ENCODE measurements at regions of chr13 and their contacts with region 1.

Region 1: GRCh38 chr13:43804461-43805070 is 17.8 kb upstream of the ENOX1 start:
- DNase-seq: peak; percentile 64
- H3K4me3 ChIP-seq: peak overlapping the region; percentile 39 to 52 (median 40)
- H3K27ac ChIP-seq: peak overlapping the region; percentile 98
- H3K4me1 ChIP-seq: peaks cover 27% of the 10 kb centered on the region
- H3K27me3 ChIP-seq: no peaks in the 10 kb centered on the region
- CTCF ChIP-seq: peak; percentile 35 to 46

Region 2: GRCh38 chr13:42594970-42595571 is 1209.5 kb before region 1 on chr13:
- CTCF ChIA-PET with region 1: no interaction called
- dilution Hi-C with region 1: no loop called
- in situ Hi-C with region 1: no loop called
- intact Hi-C with region 1: loop called (anchors 10 kb)
- DNase-seq: peak; percentile 48
- H3K4me3 ChIP-seq: no peak overlapping the region
- H3K27ac ChIP-seq: no peak overlapping the region
- H3K4me1 ChIP-seq: no peaks in the 10 kb centered on the region
- H3K27me3 ChIP-seq: no peaks in the 10 kb centered on the region
- CTCF ChIP-seq: peak; percentile 77 to 89

Region 3: GRCh38 chr13:42883771-42884467 is 920.6 kb before region 1 on chr13:
- CTCF ChIA-PET with region 1: no interaction called
- dilution Hi-C with region 1: no loop called
- in situ Hi-C with region 1: no loop called
- intact Hi-C with region 1: loop called (anchors 10 kb)
- DNase-seq: peak; percentile 25
- H3K4me3 ChIP-seq: no peak overlapping the region
- H3K27ac ChIP-seq: no peak overlapping the region
- H3K4me1 ChIP-seq: peaks cover 12% of the 10 kb centered on the region
- H3K27me3 ChIP-seq: no peaks in the 10 kb centered on the region
- CTCF ChIP-seq: peak; percentile 29 to 36

Region 4: GRCh38 chr13:43085545-43085944 is 719.0 kb before region 1 on chr13:
- CTCF ChIA-PET with region 1: interaction called, 4 read pairs
- dilution Hi-C with region 1: no loop called
- in situ Hi-C with region 1: loop called in 1 of 2 experiments (anchors 25 kb)
- intact Hi-C with region 1: loop called (anchors 1 kb)
- DNase-seq: peak; percentile 12
- H3K4me3 ChIP-seq: no peak overlapping the region
- H3K27ac ChIP-seq: no peak overlapping the region
- H3K4me1 ChIP-seq: no peaks in the 10 kb centered on the region
- H3K27me3 ChIP-seq: no peaks in the 10 kb centered on the region
- CTCF ChIP-seq: peak; percentile 44 to 45

Region 5: GRCh38 chr13:43196086-43196621 is 608.4 kb before region 1 on chr13:
- CTCF ChIA-PET with region 1: no interaction called
- dilution Hi-C with region 1: no loop called
- in situ Hi-C with region 1: no loop called
- intact Hi-C with region 1: loop called (anchors 5 kb)
- DNase-seq: no peak
- H3K4me3 ChIP-seq: no peak overlapping the region
- H3K27ac ChIP-seq: no peak overlapping the region
- H3K4me1 ChIP-seq: no peaks in the 10 kb centered on the region
- H3K27me3 ChIP-seq: no peaks in the 10 kb centered on the region
- CTCF ChIP-seq: peak in 1 of 2 donors; percentile 20

Region 6: GRCh38 chr13:43303033-43303729 is 501.4 kb before region 1 on chr13:
- CTCF ChIA-PET with region 1: interaction called, 5 read pairs
- dilution Hi-C with region 1: no loop called
- in situ Hi-C with region 1: no loop called
- intact Hi-C with region 1: loop called (anchors 1 kb)
- DNase-seq: peak; percentile 23
- H3K4me3 ChIP-seq: no peak overlapping the region
- H3K27ac ChIP-seq: no peak overlapping the region
- H3K4me1 ChIP-seq: peaks cover 17% of the 10 kb centered on the region
- H3K27me3 ChIP-seq: no peaks in the 10 kb centered on the region
- CTCF ChIP-seq: peak; percentile 16 to 69

Measured in mammary epithelial cell (primary cell).